Activated CD4-positive, alpha-beta memory T cell treated with anti-CD3 and anti-CD28 coated beads for 36 hours (primary cell): ENCODE measurements at regions of chr16 and their contacts with region 1.

Region 1: GRCh38 chr16:11094072-11094856 is 149.9 kb downstream of the CLEC16A start:
- DNase-seq: peak; percentile 87
- H3K4me3 Mint-ChIP-seq: peak overlapping the region; percentile 49
- H3K27ac Mint-ChIP-seq: peak overlapping the region; percentile 98
- H3K4me1 Mint-ChIP-seq: peaks cover 82% of the 10 kb centered on the region
- H3K27me3 Mint-ChIP-seq: no peaks in the 10 kb centered on the region

Region 2: GRCh38 chr16:10876799-10877341 is 217.4 kb before region 1 on chr16 and contains the start of gene CIITA:
- CTCF ChIA-PET with region 1: no interaction called
- POLR2A ChIA-PET with region 1: no interaction called
- intact Hi-C with region 1: loop called (anchors 10 kb)
- DNase-seq: peak; percentile 80
- H3K4me3 Mint-ChIP-seq: peak within 1 kb of the TSS; percentile 75
- H3K27ac Mint-ChIP-seq: peak within 1 kb of the TSS; percentile 24
- H3K4me1 Mint-ChIP-seq: peaks cover 69% of the 10 kb centered on the region
- H3K27me3 Mint-ChIP-seq: peaks cover 68% of the 10 kb centered on the region
- total RNA-seq, gene CIITA: 1.8 to 3.2 TPM

Region 3: DNA sequence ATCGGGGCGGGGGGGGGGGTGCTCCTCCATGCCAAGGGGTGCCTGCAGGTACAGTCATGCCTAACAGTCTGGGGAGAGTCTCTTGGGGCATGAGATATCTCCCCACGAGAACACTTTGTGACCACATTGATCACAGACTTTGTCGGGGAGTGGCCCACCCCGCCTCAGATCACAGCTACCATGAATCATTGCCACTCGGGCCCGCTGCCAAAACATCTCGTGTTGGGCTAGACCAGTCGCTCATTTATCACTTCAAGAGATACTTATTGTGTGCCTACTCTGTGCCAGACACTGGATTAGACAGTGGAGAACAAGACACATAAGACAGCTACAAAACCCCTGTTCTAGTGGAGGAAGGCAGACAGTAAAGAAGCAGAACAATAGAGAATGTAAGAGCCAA is 77.3 kb before region 1 on chr16:
- CTCF ChIA-PET with region 1: no interaction called
- POLR2A ChIA-PET with region 1: no interaction called
- intact Hi-C with region 1: no loop called
- DNase-seq: peak; percentile 39
- H3K4me3 Mint-ChIP-seq: no peak overlapping the region
- H3K27ac Mint-ChIP-seq: no peak overlapping the region
- H3K4me1 Mint-ChIP-seq: peaks cover 8% of the 10 kb centered on the region
- H3K27me3 Mint-ChIP-seq: no peaks in the 10 kb centered on the region

Region 4: GRCh38 chr16:11051879-11052808 is 42.1 kb before region 1 on chr16:
- CTCF ChIA-PET with region 1: interaction called, 14 read pairs
- POLR2A ChIA-PET with region 1: interaction called, 36 read pairs
- intact Hi-C with region 1: loop called (anchors 1 kb)
- DNase-seq: peak; percentile 94
- H3K4me3 Mint-ChIP-seq: peak overlapping the region; percentile 24
- H3K27ac Mint-ChIP-seq: peak overlapping the region; percentile 94
- H3K4me1 Mint-ChIP-seq: peaks cover 64% of the 10 kb centered on the region
- H3K27me3 Mint-ChIP-seq: no peaks in the 10 kb centered on the region

Region 5: GRCh38 chr16:11105038-11105903 is 11.0 kb after region 1 on chr16:
- CTCF ChIA-PET with region 1: interaction called, 23 read pairs
- POLR2A ChIA-PET with region 1: interaction called, 27 read pairs
- intact Hi-C with region 1: loop called (anchors 1 kb)
- DNase-seq: peak; percentile 69
- H3K4me3 Mint-ChIP-seq: peak overlapping the region; percentile 56
- H3K27ac Mint-ChIP-seq: peak overlapping the region; percentile 97
- H3K4me1 Mint-ChIP-seq: peaks cover 72% of the 10 kb centered on the region
- H3K27me3 Mint-ChIP-seq: no peaks in the 10 kb centered on the region

Region 6: GRCh38 chr16:11232852-11233726 is 138.8 kb after region 1 on chr16:
- CTCF ChIA-PET with region 1: no interaction called
- POLR2A ChIA-PET with region 1: interaction called, 10 read pairs
- intact Hi-C with region 1: loop called (anchors 1 kb)
- DNase-seq: peak; percentile 97
- H3K4me3 Mint-ChIP-seq: peak overlapping the region; percentile 62
- H3K27ac Mint-ChIP-seq: peak overlapping the region; percentile 99
- H3K4me1 Mint-ChIP-seq: peaks cover 74% of the 10 kb centered on the region
- H3K27me3 Mint-ChIP-seq: no peaks in the 10 kb centered on the region